ENCODE measurements at regions of chr3 and their contacts with region 1.

Region 1: GRCh38 chr3:111668912-111669488 is 73.9 kb upstream of the ZBED2 start:
- DNase-seq: no peak
- H3K4me3 ChIP-seq: no peak overlapping the region
- H3K27ac ChIP-seq: no peak overlapping the region
- H3K4me1 ChIP-seq: peaks cover 4% of the 10 kb centered on the region
- H3K27me3 ChIP-seq: no peaks in the 10 kb centered on the region
- CTCF ChIP-seq: peak; percentile 76

Region 2: GRCh38 chr3:111691293-111691909 is 22.4 kb after region 1 on chr3:
- intact Hi-C with region 1: loop called (anchors 2 kb)
- DNase-seq: no peak
- H3K4me3 ChIP-seq: no peak overlapping the region
- H3K27ac ChIP-seq: no peak overlapping the region
- H3K4me1 ChIP-seq: no peaks in the 10 kb centered on the region
- H3K27me3 ChIP-seq: no peaks in the 10 kb centered on the region
- CTCF ChIP-seq: peak; percentile 14

Region 3: GRCh38 chr3:111967651-111968274 is 298.8 kb after region 1 on chr3:
- intact Hi-C with region 1: loop called (anchors 2 kb)
- DNase-seq: peak; percentile 92
- H3K4me3 ChIP-seq: no peak overlapping the region
- H3K27ac ChIP-seq: no peak overlapping the region
- H3K4me1 ChIP-seq: no peaks in the 10 kb centered on the region
- H3K27me3 ChIP-seq: no peaks in the 10 kb centered on the region
- CTCF ChIP-seq: peak; percentile 90